IMR-90 (cell line): ENCODE measurements at regions of chr15 and their contacts with region 1.

Region 1: DNA sequence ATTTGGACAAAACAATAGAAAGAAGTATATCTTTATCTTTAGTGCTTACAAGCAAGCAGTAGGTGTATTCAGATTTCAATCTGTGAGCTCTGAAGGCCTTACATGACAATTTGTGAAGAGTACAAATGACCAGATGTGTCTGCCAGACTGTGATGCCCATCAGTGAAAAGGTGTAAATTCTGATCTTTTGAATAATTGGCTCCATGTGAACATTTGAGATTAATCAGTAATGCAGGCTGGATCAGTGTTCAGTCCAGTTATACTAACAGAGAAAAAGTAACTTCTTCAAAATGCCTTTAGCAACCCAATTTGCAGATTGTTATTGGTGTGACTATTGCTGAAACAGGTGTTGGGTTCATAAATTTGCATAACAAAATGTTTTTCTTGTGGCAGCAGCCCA is 5.2 kb downstream of the IQCH start:
- DNase-seq: no peak
- ATAC-seq: no peak
- H3K4me3 ChIP-seq: no peak overlapping the region
- H3K27ac ChIP-seq: no peak overlapping the region
- H3K4me1 ChIP-seq: no peaks in the 10 kb centered on the region
- H3K27me3 ChIP-seq: no peaks in the 10 kb centered on the region
- CTCF ChIP-seq: no peak
- POLR2A ChIP-seq: no peak
- RAD21 ChIP-seq: no peak

Region 2: DNA sequence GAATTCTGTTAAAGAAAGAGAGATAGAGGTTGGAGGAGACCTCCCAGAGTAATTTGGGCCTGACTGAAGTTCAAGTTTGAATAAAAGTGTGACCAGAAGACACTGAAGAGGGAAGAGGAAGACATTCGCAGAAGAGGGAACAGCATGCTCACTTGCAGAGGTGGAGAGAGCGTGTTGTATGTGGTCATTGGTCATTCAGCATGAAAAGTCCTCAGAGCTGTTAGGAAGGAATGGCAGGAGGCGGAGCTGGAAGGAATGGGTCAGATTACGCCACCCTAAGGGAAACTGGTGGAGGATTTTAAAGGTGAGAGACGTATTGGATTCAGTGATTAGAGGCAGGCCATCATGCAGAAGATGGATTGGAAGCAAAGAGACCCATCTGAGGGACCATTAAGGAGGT is 36.4 kb after region 1 on chr15:
- CTCF ChIA-PET with region 1: no interaction called
- POLR2A ChIA-PET with region 1: no interaction called
- dilution Hi-C with region 1: no loop called
- in situ Hi-C with region 1: loop called (anchors 5 kb)
- intact Hi-C with region 1: no loop called
- DNase-seq: no peak
- ATAC-seq: no peak
- H3K4me3 ChIP-seq: no peak overlapping the region
- H3K27ac ChIP-seq: no peak overlapping the region
- H3K4me1 ChIP-seq: no peaks in the 10 kb centered on the region
- H3K27me3 ChIP-seq: no peaks in the 10 kb centered on the region
- CTCF ChIP-seq: no peak
- POLR2A ChIP-seq: no peak
- RAD21 ChIP-seq: no peak